ENCODE measurements at regions of chr22 and their contacts with region 1.

Region 1: GRCh38 chr22:50276143-50276542 is 6.0 kb upstream of the MAPK11 start:
- DNase-seq: peak in 1 of 2 donors; percentile 75
- ATAC-seq: peak; percentile 72 to 93 (median 78)
- H3K4me3 ChIP-seq: no peak overlapping the region
- H3K27ac ChIP-seq: peak overlapping the region in 1 of 10 donors; percentile 32
- H3K4me1 ChIP-seq: peaks cover 8 to 27% (median 20%) of the 10 kb centered on the region in 9 donors
- H3K27me3 ChIP-seq: peaks cover 0 to 18% (median 0%) of the 10 kb centered on the region in 7 donors
- CTCF ChIP-seq: peak; percentile 21 to 76 (median 61)

Region 2: GRCh38 chr22:50306753-50307749 is 30.9 kb after region 1 on chr22 and contains the start of gene PLXNB2:
- intact Hi-C with region 1: loop called in 1 of 10 experiments (anchors 5 kb)
- DNase-seq: peak; percentile 87 to 88
- ATAC-seq: peak; percentile 36 to 76 (median 62)
- H3K4me3 ChIP-seq: peak within 1 kb of the TSS; percentile 85 to 98 (median 94)
- H3K27ac ChIP-seq: peak within 1 kb of the TSS; percentile 91 to 98 (median 94)
- H3K4me1 ChIP-seq: peaks cover 43 to 66% (median 64%) of the 10 kb centered on the region in 9 donors
- H3K27me3 ChIP-seq: peaks cover 0 to 4% (median 0%) of the 10 kb centered on the region in 7 donors
- CTCF ChIP-seq: no peak
- total RNA-seq, gene PLXNB2: 43.0 to 101 (median 57.8) TPM

Region 3: GRCh38 chr22:50320671-50321325 is 44.7 kb after region 1 on chr22:
- intact Hi-C with region 1: loop called in 3 of 10 experiments (anchors 5 kb)
- DNase-seq: no peak
- ATAC-seq: no peak
- H3K4me3 ChIP-seq: no peak overlapping the region
- H3K27ac ChIP-seq: no peak overlapping the region
- H3K4me1 ChIP-seq: peaks cover 0 to 4% (median 0%) of the 10 kb centered on the region in 9 donors
- H3K27me3 ChIP-seq: no peaks in the 10 kb centered on the region
- CTCF ChIP-seq: no peak

Region 4: DNA sequence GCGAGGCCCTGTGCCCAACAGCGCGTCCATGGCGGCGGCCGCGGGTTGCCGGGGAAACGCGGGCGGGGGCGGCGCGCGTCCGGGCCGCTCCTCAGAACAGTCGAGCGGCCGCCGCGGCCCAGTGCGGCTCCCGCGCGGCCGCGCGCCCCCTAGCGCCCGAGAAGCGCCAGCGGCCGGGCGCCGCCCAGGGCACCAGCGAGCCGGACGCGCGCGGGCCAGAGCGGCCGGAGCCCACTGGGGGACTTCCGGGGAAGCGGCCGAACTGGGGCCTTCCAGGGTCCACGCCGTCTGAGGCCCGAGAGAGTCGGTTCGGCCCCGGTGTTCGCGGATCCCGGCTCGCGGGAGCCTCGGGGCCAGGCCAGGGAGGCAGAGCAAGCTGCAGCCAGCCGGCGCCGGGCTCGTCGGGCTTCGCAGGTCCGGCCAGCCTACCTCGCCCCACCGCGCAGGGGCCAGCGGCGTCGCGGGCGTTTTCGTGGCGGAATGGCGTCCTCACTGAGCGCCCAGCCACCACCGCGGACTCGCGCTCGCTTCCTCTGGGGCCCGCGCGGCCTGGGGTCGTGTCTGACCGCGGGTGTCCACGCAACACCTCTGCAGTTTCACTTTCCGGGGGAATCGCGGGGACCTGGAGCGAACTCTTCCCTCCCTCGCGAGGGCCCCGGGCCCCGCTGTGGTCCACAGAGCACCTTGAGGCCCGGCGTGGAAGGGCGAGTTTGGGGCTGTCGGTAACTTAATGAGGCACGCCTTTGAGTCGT is 51.0 kb after region 1 on chr22 and contains the start of gene DENND6B:
- intact Hi-C with region 1: loop called (anchors 1 to 5 kb)
- DNase-seq: peak; percentile 73 to 85
- ATAC-seq: peak; percentile 92 to 99 (median 95)
- H3K4me3 ChIP-seq: peak within 1 kb of the TSS; percentile 44 to 98 (median 80)
- H3K27ac ChIP-seq: peak within 1 kb of the TSS; percentile 89 to 100 (median 96)
- H3K4me1 ChIP-seq: peaks cover 0 to 20% (median 14%) of the 10 kb centered on the region in 9 donors
- H3K27me3 ChIP-seq: no peaks in the 10 kb centered on the region
- CTCF ChIP-seq: peak; percentile 33 to 87 (median 59)
- total RNA-seq, gene DENND6B: 1.1 to 3.6 (median 2.0) TPM

Region 5: GRCh38 chr22:50341977-50342650 is 66.0 kb after region 1 on chr22:
- intact Hi-C with region 1: loop called in 4 of 10 experiments (anchors 1 to 5 kb)
- DNase-seq: peak; percentile 88 to 89
- ATAC-seq: peak; percentile 71 to 90 (median 84)
- H3K4me3 ChIP-seq: peak overlapping the region in 9 of 10 donors; percentile 69 to 98 (median 78)
- H3K27ac ChIP-seq: peak overlapping the region in 9 of 10 donors; percentile 56 to 91 (median 79)
- H3K4me1 ChIP-seq: peaks cover 0 to 19% (median 12%) of the 10 kb centered on the region in 9 donors
- H3K27me3 ChIP-seq: no peaks in the 10 kb centered on the region
- CTCF ChIP-seq: peak; percentile 93 to 99 (median 97)

Measured in heart right ventricle (tissue), 16 donors.